ENCODE measurements at regions of chr16 and their contacts with region 1.

Region 1: GRCh38 chr16:56938422-56939156 is 6.6 kb downstream of the HERPUD1 start:
- DNase-seq: peak; percentile 91
- ATAC-seq: peak; percentile 80
- H3K4me3 Mint-ChIP-seq: peak overlapping the region; percentile 69
- H3K27ac Mint-ChIP-seq: peak overlapping the region; percentile 93
- H3K4me1 Mint-ChIP-seq: peaks cover 89% of the 10 kb centered on the region
- H3K27me3 Mint-ChIP-seq: no peaks in the 10 kb centered on the region

Region 2: GRCh38 chr16:56950881-56951771 is 12.5 kb after region 1 on chr16:
- CTCF ChIA-PET with region 1: interaction called, 26 read pairs
- DNase-seq: peak; percentile 79
- ATAC-seq: peak; percentile 89
- H3K4me3 Mint-ChIP-seq: no peak overlapping the region
- H3K27ac Mint-ChIP-seq: peak overlapping the region; percentile 51
- H3K4me1 Mint-ChIP-seq: peaks cover 24% of the 10 kb centered on the region
- H3K27me3 Mint-ChIP-seq: peaks cover 3% of the 10 kb centered on the region

Measured in activated CD8-positive, alpha-beta memory T cell treated with anti-CD3 and anti-CD28 coated beads, Interleukin-2, amount 10 ng/mL, durations not matched to agents 7 days and 5 days (primary cell).